ENCODE measurements at regions of chr6 and their contacts with region 1.

Region 1: DNA sequence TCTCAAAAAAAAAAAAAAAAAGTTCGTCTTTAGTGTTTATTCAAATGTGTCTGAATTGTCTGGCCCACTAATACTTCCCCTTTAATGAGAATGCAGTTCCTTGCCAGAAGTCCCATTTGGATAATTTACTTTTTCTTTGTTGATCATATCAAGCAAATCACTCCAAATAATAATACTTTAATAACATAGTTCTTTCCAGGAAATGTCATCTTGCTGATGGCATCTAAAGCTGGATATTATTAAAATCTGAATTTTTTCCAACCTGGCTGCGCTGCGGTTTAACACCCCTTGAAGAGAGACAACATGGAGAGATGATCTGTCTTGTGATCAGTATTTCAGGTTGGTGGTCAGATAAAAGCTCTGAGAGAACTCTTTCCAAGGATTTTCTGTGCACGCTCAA is 111.2 kb upstream of the CNKSR3 start:
- DNase-seq: no peak
- H3K4me3 Mint-ChIP-seq: no peak overlapping the region
- H3K27ac Mint-ChIP-seq: no peak overlapping the region
- H3K4me1 Mint-ChIP-seq: no peaks in the 10 kb centered on the region
- H3K27me3 Mint-ChIP-seq: no peaks in the 10 kb centered on the region
- CTCF ChIP-seq: no peak

Region 2: GRCh38 chr6:154196333-154196885 is 425.3 kb before region 1 on chr6:
- CTCF ChIA-PET with region 1: interaction called, 10 read pairs
- intact Hi-C with region 1: no loop called
- DNase-seq: no peak
- H3K4me3 Mint-ChIP-seq: no peak overlapping the region
- H3K27ac Mint-ChIP-seq: no peak overlapping the region
- H3K4me1 Mint-ChIP-seq: no peaks in the 10 kb centered on the region
- H3K27me3 Mint-ChIP-seq: no peaks in the 10 kb centered on the region
- CTCF ChIP-seq: no peak